Activated CD4-positive, alpha-beta T cell treated with anti-CD3 and anti-CD28 coated beads, Interleukin-2, amount 10 ng/mL, durations not matched to agents 7 days and 5 days (primary cell): ENCODE measurements at regions of chr7 and their contacts with region 1.

Region 1: GRCh38 chr7:24894429-24895221 is 85.4 kb downstream of the OSBPL3 start:
- DNase-seq: no peak
- H3K4me3 Mint-ChIP-seq: no peak overlapping the region
- H3K27ac Mint-ChIP-seq: no peak overlapping the region
- H3K4me1 Mint-ChIP-seq: peaks cover 48% of the 10 kb centered on the region
- H3K27me3 Mint-ChIP-seq: no peaks in the 10 kb centered on the region

Region 2: GRCh38 chr7:24587848-24588247 is 306.8 kb before region 1 on chr7:
- CTCF ChIA-PET with region 1: no interaction called
- POLR2A ChIA-PET with region 1: no interaction called
- DNase-seq: peak; percentile 57
- H3K4me3 Mint-ChIP-seq: no peak overlapping the region
- H3K27ac Mint-ChIP-seq: no peak overlapping the region
- H3K4me1 Mint-ChIP-seq: peaks cover 13% of the 10 kb centered on the region
- H3K27me3 Mint-ChIP-seq: no peaks in the 10 kb centered on the region

Region 3: DNA sequence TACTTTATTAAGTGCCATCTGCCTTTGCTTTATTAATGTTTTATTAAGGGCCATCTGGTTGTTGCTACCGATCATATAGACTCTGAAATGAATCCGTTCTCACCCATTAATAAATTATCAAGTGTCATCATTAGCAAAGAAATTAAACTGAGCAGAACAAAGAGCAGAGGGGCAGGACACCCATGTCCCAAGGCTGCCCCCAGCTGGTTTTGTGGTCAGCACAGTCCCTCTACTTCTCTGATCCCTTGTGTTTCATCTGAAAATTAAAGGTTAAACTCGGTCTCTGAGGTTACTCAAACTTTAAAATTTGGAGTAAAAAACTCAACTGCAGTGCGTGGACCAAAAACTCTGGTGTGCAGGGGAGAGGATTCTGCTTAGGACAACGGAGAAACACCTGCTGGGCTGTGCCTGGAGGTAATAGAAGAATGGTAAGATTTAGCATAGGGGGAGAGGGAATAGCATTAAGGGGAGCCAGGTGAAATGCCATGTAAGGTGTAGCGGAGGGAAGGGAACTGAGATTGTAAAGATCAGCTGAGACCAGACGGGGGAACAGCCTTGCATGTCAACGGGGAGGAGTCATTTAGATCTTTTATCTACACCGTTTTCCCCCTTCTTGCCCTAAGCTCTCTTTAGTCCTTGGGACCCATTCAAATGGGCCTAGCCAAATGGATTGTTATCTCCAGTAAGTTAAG is 126.6 kb before region 1 on chr7:
- CTCF ChIA-PET with region 1: no interaction called
- POLR2A ChIA-PET with region 1: no interaction called
- DNase-seq: no peak
- H3K4me3 Mint-ChIP-seq: no peak overlapping the region
- H3K27ac Mint-ChIP-seq: no peak overlapping the region
- H3K4me1 Mint-ChIP-seq: peaks cover 29% of the 10 kb centered on the region
- H3K27me3 Mint-ChIP-seq: peaks cover 31% of the 10 kb centered on the region

Region 4: DNA sequence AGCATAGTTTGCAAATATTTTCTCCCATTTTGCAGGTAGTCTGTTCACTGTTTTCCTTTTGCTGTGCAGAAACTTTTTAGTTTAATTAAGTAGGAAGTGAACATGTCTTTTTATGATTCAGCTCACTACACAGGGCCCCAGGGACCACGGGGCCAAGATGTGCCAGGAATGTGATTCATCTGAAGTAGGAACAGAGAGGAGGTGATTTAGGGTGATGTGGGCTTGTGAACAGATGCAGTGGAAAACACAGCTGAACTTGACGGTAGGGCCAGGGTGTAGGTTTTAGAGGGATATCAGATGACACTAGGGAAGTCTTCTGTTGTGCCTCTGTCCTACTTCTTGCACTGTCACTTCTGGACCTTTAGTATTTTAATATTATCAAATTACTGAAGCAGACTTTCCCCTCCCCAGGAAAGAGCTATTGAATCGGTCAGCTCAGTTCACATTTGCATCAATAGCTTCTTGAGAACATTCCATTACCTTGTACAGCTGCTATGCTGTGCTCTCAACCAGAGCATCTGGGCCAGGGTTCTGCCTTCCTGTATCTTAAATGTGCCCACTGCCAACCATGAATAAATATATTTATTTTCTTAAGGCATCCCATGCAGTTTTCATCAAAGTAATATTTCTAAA is 11.5 kb before region 1 on chr7:
- CTCF ChIA-PET with region 1: interaction called, 11 read pairs
- POLR2A ChIA-PET with region 1: no interaction called
- DNase-seq: no peak
- H3K4me3 Mint-ChIP-seq: no peak overlapping the region
- H3K27ac Mint-ChIP-seq: peak overlapping the region; percentile 46
- H3K4me1 Mint-ChIP-seq: peaks cover 24% of the 10 kb centered on the region
- H3K27me3 Mint-ChIP-seq: no peaks in the 10 kb centered on the region

Region 5: DNA sequence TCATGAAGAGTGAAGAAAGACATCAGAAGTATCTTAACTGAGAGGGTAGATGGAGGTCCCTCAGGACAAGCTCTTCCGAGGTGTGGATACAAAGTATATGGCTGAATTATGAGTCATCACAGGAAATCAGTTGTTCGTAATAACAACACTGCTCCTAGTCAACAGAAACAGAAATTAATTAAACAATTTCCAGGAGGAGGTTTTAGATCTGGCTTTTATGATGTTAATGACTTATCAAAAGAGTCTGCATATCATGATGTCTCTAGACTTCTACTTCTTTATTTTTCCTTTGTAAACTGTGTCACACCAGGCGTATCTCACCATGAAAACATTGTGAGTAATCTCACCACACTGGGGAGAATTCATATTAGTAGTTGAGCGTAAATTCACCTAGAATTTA is 54.1 kb after region 1 on chr7:
- CTCF ChIA-PET with region 1: no interaction called
- POLR2A ChIA-PET with region 1: no interaction called
- DNase-seq: no peak
- H3K4me3 Mint-ChIP-seq: no peak overlapping the region
- H3K27ac Mint-ChIP-seq: peak overlapping the region; percentile 6
- H3K4me1 Mint-ChIP-seq: peaks cover 37% of the 10 kb centered on the region
- H3K27me3 Mint-ChIP-seq: no peaks in the 10 kb centered on the region